Common myeloid progenitor, CD34-positive (primary cell): ENCODE measurements at regions of chr1 and their contacts with region 1.

Region 1: GRCh38 chr1:155934097-155934935 is at the start of gene KHDC4:
- DNase-seq: peak; percentile 99 to 100 (median 100)
- H3K4me3 ChIP-seq: peak within 1 kb of the TSS; percentile 74 to 100 (median 93)
- H3K27ac ChIP-seq: peak within 1 kb of the TSS; percentile 99
- H3K4me1 ChIP-seq: peaks cover 4 to 34% (median 28%) of the 10 kb centered on the region in 4 experiments
- H3K27me3 ChIP-seq: no peaks in the 10 kb centered on the region

Region 2: DNA sequence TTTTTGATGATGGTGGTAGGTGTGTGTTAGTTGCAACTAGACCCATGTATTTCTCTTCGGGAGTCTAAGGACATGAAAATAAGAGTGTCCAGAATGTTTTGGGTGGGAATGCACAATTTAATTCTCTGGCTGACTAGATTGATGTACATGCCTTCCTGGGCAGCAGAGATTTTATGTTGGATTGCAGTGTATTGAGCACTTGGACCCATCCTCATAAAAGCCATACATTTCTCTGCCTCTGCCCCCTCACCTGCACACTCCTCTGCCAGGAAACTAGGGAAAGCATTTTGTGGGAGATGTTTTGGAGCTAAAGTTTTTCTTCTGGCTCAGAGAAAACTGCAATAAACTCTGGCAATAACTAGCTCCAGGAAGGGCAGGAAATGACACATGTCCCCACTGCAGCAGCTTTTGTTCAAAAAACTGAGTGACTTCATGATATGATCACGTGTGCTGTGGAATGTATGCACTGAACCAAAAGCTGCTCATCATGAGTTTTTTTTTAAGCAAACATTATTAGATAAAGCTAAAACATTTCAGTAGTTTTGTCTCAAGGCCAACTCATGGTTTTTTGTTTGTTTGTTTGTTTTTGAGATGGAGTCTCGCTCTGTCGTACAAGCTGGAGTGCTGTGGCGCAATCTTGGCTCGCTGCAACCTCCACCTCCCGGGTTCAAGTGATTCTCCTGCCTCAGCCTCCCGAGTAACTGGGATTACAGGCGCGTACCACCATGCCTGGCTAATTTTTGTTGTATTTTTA is 40.8 kb before region 1 on chr1:
- CTCF ChIA-PET with region 1: no interaction called
- POLR2A ChIA-PET with region 1: no interaction called
- DNase-seq: peak; percentile 59 to 83 (median 75)
- H3K4me3 ChIP-seq: peak overlapping the region in 2 of 7 experiments; percentile 3 to 16
- H3K27ac ChIP-seq: peak overlapping the region; percentile 21 to 50
- H3K4me1 ChIP-seq: peaks cover 6 to 12% (median 10%) of the 10 kb centered on the region in 4 experiments
- H3K27me3 ChIP-seq: no peaks in the 10 kb centered on the region

Region 3: DNA sequence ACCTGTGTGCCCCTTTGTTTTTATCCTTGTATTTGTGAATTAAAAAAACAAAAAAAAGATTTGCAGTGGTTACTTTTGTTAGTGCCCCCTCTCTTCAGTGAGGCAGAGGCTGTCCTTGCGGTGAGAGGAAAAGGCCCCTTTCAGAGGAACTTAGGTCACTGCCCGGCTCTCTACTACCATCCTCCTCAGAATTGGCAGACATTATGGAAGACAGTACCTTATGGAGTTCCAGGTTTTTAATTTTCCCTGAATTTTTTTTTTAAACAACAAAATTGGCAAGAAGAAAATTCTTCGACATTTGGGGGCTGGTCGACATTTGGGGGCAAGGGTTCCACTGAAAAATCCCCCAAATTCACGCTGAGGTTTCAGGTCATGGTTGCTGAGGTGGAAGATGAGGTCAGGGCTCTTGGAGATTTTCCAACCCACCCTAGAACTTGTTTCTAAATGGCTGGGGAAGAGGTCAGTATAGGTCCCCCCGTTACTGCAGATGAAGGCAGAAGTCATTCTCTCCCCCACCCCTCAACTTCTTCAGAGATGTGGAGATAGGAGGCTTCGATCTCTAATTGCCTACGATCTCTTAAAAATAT is 12.4 kb after region 1 on chr1:
- CTCF ChIA-PET with region 1: interaction called, 14 read pairs
- POLR2A ChIA-PET with region 1: no interaction called
- DNase-seq: no peak
- H3K4me3 ChIP-seq: peak overlapping the region in 1 of 7 experiments; percentile 25
- H3K27ac ChIP-seq: peak overlapping the region in 1 of 2 experiments; percentile 61
- H3K4me1 ChIP-seq: peaks cover 2 to 38% (median 29%) of the 10 kb centered on the region in 4 experiments
- H3K27me3 ChIP-seq: no peaks in the 10 kb centered on the region

Region 4: DNA sequence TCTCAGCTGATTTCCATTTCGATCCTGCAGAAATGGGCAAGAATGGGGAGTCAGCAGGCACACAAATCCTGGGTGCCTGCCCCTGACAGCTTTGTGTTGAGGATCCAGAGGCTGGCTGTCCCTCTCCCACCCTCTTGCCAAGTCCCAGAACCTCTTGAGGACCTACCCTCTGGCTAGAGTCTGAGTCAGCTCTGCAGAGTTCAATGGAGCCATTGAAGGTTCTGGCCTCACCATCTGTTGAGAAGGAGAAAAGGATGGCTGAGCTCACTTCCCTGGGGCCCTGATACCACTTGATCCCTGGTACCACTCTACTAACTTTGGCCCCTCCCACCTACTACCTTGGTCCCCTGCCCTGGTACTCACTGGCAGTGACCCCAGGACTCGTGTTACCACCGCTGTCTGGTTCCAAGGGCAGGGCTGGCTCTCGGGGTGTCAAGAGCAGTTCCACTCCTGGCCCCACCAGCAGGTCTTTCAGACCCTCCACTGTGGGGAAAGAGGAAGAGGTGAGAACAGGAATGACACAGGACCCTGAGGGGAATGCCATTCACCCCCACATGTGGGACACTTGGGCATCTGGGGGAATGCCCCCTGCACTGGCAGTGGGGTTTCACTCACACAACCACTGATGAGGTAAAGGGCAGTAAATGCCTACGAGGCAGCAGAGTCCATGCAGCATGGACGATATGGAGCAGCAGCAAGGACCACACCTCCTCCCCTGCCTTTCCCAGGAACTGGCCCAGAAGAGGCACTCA is 17.6 kb after region 1 on chr1:
- CTCF ChIA-PET with region 1: interaction called, 14 read pairs
- POLR2A ChIA-PET with region 1: interaction called, 4 read pairs
- DNase-seq: no peak
- H3K4me3 ChIP-seq: no peak overlapping the region
- H3K27ac ChIP-seq: peak overlapping the region in 1 of 2 experiments; percentile 11
- H3K4me1 ChIP-seq: peaks cover 0 to 5% (median 4%) of the 10 kb centered on the region in 4 experiments
- H3K27me3 ChIP-seq: no peaks in the 10 kb centered on the region

Region 5: GRCh38 chr1:155970531-155971167 is 36.3 kb after region 1 on chr1:
- CTCF ChIA-PET with region 1: interaction called, 26 read pairs
- POLR2A ChIA-PET with region 1: interaction called, 8 read pairs
- DNase-seq: peak; percentile 75 to 91 (median 90)
- H3K4me3 ChIP-seq: peak overlapping the region in 6 of 7 experiments; percentile 12 to 62 (median 33)
- H3K27ac ChIP-seq: peak overlapping the region in 1 of 2 experiments; percentile 95
- H3K4me1 ChIP-seq: peaks cover 39 to 95% (median 92%) of the 10 kb centered on the region in 4 experiments
- H3K27me3 ChIP-seq: no peaks in the 10 kb centered on the region

Region 6: DNA sequence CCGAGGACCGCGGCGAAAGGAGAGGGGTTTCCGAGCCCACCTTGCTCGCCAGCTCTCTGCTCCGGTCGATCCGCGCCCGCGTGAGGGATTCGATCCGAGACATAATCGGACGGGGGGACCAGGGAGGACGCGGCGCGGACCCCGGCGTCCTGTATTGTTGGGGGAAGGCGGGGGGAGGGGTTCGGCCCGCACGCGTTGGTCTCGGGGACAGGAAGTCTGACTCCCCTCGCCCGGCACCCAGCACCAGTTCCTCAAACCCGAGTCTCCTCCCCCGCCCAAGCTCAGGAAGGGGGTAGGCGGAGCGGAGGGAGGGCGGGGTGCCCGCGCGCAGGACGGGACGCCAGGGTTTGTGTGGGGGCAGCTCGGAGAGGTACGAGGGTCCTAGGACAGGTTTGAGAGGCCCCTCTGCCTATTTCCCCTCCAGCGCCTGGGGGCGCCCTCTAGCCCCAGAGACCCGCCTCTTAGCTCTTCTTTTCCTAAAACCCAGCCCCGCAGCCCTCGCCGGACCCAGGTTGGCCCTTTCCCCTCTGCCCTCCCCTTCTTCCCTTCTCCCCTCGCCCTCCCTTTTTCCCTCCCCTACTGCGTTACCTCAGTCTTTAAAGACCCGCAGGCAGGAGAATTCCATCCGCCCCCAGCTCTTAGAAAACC is 44.1 kb after region 1 on chr1 and contains the start of gene ARHGEF2:
- CTCF ChIA-PET with region 1: interaction called, 36 read pairs
- POLR2A ChIA-PET with region 1: interaction called, 8 read pairs
- DNase-seq: peak; percentile 87 to 96 (median 93)
- H3K4me3 ChIP-seq: peak within 1 kb of the TSS; percentile 79 to 99 (median 92)
- H3K27ac ChIP-seq: peak within 1 kb of the TSS; percentile 87 to 95
- H3K4me1 ChIP-seq: peaks cover 44 to 87% (median 83%) of the 10 kb centered on the region in 4 experiments
- H3K27me3 ChIP-seq: no peaks in the 10 kb centered on the region

Region 7: DNA sequence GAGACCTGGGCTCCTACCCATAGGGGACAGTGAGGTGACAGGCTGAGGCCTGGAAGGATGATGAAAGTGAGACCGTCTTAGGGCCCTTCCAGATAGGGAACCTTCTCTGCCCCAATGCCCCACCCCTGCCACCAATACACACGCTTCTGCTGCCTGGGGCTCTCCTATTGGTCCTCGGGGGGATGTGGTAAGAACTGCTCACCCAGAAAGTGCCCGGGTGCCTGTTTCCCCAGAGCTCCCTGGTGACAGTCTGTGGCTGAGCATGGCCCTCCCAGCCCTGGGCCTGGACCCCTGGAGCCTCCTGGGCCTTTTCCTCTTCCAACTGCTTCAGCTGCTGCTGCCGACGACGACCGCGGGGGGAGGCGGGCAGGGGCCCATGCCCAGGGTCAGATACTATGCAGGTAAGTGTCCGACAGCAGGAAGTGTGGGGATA is 220.0 kb after region 1 on chr1:
- CTCF ChIA-PET with region 1: no interaction called
- POLR2A ChIA-PET with region 1: no interaction called
- DNase-seq: peak; percentile 54 to 74 (median 73)
- H3K4me3 ChIP-seq: peak overlapping the region in 5 of 7 experiments; percentile 12 to 60 (median 40)
- H3K27ac ChIP-seq: no peak overlapping the region
- H3K4me1 ChIP-seq: peaks cover 8 to 55% (median 27%) of the 10 kb centered on the region in 4 experiments
- H3K27me3 ChIP-seq: no peaks in the 10 kb centered on the region